Mammary epithelial cell (primary cell): ENCODE measurements at regions of chr15 and their contacts with region 1.

Region 1: DNA sequence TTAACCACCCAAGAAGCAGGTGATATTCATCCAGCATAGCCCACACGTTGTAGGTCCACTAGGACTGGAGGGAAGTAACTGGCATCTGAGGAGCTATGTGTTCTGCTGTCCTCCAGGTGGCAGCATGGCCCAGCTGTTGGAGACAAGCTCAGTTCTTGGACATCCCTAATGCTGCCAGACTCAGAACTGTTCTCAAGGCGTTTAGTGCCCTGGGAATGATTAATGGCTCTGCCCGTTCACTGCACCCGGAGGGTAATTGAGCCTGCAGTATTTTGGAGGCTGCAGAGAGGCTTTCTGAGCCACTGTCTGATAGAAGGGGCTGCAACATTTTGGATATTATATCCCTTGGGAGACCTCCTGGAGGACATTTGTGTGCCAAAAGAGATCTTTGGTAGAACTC is 521.2 kb upstream of the SEMA6D start:
- DNase-seq: peak; percentile 65
- H3K4me3 ChIP-seq: no peak overlapping the region
- H3K27ac ChIP-seq: no peak overlapping the region
- H3K4me1 ChIP-seq: no peaks in the 10 kb centered on the region
- H3K27me3 ChIP-seq: no peaks in the 10 kb centered on the region
- CTCF ChIP-seq: peak; percentile 83 to 89

Region 2: DNA sequence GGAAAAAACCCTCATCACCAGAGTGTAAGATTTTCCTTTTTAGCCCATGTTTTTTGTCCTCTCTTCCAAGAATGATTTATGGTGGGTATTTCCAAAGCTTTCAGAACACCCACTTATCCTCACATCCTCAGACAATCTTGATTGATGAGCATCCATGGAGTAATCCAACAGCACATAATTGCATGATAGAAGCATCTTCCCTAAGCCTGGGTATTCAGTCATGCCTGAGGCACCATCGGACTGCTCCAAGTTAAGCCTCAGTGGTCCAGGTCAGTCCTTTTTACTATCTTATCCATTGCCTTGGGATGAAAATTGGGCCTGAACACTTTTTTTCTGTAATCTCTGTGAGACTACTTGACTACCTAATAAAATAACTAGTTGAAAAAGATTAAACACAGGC is 154.8 kb before region 1 on chr15:
- CTCF ChIA-PET with region 1: no interaction called
- dilution Hi-C with region 1: no loop called
- in situ Hi-C with region 1: no loop called
- intact Hi-C with region 1: no loop called
- DNase-seq: no peak
- H3K4me3 ChIP-seq: no peak overlapping the region
- H3K27ac ChIP-seq: no peak overlapping the region
- H3K4me1 ChIP-seq: no peaks in the 10 kb centered on the region
- H3K27me3 ChIP-seq: no peaks in the 10 kb centered on the region
- CTCF ChIP-seq: no peak

Region 3: GRCh38 chr15:47218295-47218694 is 22.2 kb after region 1 on chr15:
- CTCF ChIA-PET with region 1: no interaction called
- dilution Hi-C with region 1: no loop called
- in situ Hi-C with region 1: no loop called
- intact Hi-C with region 1: no loop called
- DNase-seq: peak; percentile 51
- H3K4me3 ChIP-seq: no peak overlapping the region
- H3K27ac ChIP-seq: no peak overlapping the region
- H3K4me1 ChIP-seq: peaks cover 14% of the 10 kb centered on the region
- H3K27me3 ChIP-seq: no peaks in the 10 kb centered on the region
- CTCF ChIP-seq: no peak

Region 4: DNA sequence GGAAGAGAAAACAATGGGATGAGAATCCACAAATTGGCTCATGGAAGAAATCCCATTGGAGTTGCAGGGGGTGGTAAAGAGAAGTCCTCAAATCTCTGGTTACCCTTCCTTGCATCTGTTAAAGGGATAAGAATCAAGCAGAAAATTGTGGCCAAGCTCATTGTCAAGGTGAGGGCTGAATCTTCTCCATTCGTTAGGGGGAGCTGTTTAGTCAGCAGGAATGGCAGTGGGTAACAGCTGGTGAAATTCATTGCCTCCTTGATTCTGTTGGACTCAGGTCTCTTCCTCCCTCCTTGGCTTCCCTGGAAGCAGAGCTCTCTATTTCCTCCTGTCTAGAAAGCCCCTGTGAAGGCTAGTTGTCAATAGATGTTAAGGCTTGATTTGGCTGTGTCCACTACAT is 178.2 kb after region 1 on chr15:
- CTCF ChIA-PET with region 1: interaction called, 6 read pairs
- dilution Hi-C with region 1: no loop called
- in situ Hi-C with region 1: no loop called
- intact Hi-C with region 1: loop called (anchors 5 kb)
- DNase-seq: peak; percentile 23
- H3K4me3 ChIP-seq: no peak overlapping the region
- H3K27ac ChIP-seq: no peak overlapping the region
- H3K4me1 ChIP-seq: no peaks in the 10 kb centered on the region
- H3K27me3 ChIP-seq: no peaks in the 10 kb centered on the region
- CTCF ChIP-seq: peak; percentile 33 to 65

Region 5: GRCh38 chr15:47577000-47577399 is 380.9 kb after region 1 on chr15:
- CTCF ChIA-PET with region 1: no interaction called
- dilution Hi-C with region 1: no loop called
- in situ Hi-C with region 1: no loop called
- intact Hi-C with region 1: loop called (anchors 10 kb)
- DNase-seq: no peak
- H3K4me3 ChIP-seq: no peak overlapping the region
- H3K27ac ChIP-seq: no peak overlapping the region
- H3K4me1 ChIP-seq: no peaks in the 10 kb centered on the region
- H3K27me3 ChIP-seq: peaks cover 2% of the 10 kb centered on the region
- CTCF ChIP-seq: no peak

Region 6: DNA sequence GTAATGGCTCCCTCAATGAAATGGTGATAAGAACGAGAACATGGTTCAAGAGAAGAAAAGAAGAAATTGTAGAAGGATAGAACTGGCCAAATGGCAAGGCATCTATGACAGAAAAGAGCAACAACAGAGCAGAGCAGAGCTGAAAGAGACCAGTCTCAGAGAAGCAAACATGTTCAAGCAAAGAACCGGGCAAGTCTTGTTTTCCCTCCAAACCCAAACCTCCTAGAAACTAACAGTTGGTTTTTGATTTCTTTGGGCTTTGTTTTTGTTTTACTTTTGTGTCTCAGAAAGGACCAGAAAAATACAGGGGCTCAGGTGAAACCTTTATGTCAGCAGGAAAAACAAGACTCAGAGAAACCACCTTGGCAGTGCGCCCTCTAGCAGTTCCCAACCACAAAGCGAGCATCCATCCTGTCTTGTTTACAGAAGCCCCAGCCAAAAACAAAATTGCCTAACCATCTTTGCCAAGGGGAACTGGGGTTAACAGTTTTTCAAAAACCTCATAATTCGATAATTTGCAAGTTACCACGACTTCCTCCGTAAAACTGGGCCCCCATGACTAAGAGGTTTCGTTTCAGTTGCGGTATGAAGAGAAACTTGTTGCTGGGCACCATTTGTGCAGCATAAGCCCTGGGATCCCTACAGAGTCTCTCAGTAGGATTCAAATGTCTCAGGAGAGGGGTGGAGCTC is 765.5 kb after region 1 on chr15:
- CTCF ChIA-PET with region 1: no interaction called
- dilution Hi-C with region 1: loop called (anchors 25 kb)
- in situ Hi-C with region 1: no loop called
- intact Hi-C with region 1: no loop called
- DNase-seq: no peak
- H3K4me3 ChIP-seq: no peak overlapping the region
- H3K27ac ChIP-seq: no peak overlapping the region
- H3K4me1 ChIP-seq: no peaks in the 10 kb centered on the region
- H3K27me3 ChIP-seq: no peaks in the 10 kb centered on the region
- CTCF ChIP-seq: no peak

Region 7: GRCh38 chr15:48250640-48251076 is 1054.6 kb after region 1 on chr15:
- CTCF ChIA-PET with region 1: no interaction called
- dilution Hi-C with region 1: no loop called
- in situ Hi-C with region 1: no loop called
- intact Hi-C with region 1: loop called (anchors 1 kb)
- DNase-seq: peak; percentile 67
- H3K4me3 ChIP-seq: no peak overlapping the region
- H3K27ac ChIP-seq: no peak overlapping the region
- H3K4me1 ChIP-seq: no peaks in the 10 kb centered on the region
- H3K27me3 ChIP-seq: peaks cover 5% of the 10 kb centered on the region
- CTCF ChIP-seq: peak; percentile 62 to 67